ENCODE measurements at regions of chr13 and their contacts with region 1.

Region 1: DNA sequence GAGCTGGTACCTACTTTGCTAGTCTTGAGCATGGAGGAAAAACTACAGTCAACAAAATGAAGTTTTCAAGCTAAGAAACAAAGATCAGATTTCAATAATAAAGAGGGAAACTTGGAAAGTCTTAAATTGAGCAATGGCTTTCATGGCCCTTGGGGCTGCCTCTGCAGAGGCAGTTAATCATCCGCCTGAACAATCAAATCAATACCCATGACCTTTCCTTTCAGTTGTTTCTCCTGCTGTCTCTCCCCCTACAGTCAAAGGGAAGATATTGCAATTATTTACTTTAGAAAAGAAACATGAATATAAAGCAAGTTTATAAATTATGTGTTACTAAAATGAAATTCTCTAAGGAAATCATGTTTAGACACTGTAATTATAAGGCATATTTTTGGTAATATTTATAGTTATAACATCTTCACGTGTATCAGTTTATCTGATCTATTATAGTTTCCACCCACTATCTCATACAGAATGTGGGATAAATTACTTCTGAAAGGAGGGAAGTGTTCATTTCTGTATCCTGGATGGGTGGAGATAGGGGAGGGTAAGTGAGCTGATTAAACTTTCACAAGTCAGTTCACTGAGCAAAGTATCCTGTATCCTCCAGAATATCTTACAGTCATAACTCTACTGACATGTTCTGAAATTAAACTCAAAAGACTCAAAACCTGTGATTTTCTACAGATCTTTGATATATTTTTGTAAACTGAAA is 72.4 kb upstream of the TSC22D1 start:
- DNase-seq: peak; percentile 22
- H3K4me3 Mint-ChIP-seq: no peak overlapping the region
- H3K27ac Mint-ChIP-seq: no peak overlapping the region
- H3K4me1 Mint-ChIP-seq: peaks cover 16% of the 10 kb centered on the region
- H3K27me3 Mint-ChIP-seq: peaks cover 23% of the 10 kb centered on the region

Region 2: DNA sequence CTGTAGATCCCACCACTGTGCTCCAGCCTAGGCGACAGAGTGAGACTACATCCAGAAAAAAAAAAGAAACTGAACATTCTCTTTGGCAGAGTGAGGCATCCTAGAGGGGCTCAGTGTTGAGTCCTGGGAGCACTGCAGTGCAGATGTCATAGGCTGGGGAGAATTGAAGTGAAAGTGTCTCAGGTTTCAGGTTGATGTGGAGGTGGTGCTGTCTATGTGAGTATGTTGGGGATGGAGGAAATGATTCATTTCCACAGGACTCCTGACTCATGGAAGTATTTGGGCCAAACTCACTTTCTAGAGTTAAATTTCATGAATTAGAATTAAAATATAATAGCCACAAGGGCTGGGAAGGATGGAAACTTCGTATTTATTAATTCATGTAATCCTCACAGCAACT is 62.0 kb after region 1 on chr13:
- CTCF ChIA-PET with region 1: no interaction called
- POLR2A ChIA-PET with region 1: no interaction called
- intact Hi-C with region 1: loop called (anchors 2 kb)
- DNase-seq: peak; percentile 41
- H3K4me3 Mint-ChIP-seq: no peak overlapping the region
- H3K27ac Mint-ChIP-seq: no peak overlapping the region
- H3K4me1 Mint-ChIP-seq: peaks cover 6% of the 10 kb centered on the region
- H3K27me3 Mint-ChIP-seq: peaks cover 22% of the 10 kb centered on the region

Region 3: GRCh38 chr13:44758630-44759383 is 110.3 kb after region 1 on chr13:
- CTCF ChIA-PET with region 1: no interaction called
- POLR2A ChIA-PET with region 1: no interaction called
- intact Hi-C with region 1: loop called (anchors 2 kb)
- DNase-seq: peak; percentile 62
- H3K4me3 Mint-ChIP-seq: no peak overlapping the region
- H3K27ac Mint-ChIP-seq: peak overlapping the region; percentile 10
- H3K4me1 Mint-ChIP-seq: peaks cover 12% of the 10 kb centered on the region
- H3K27me3 Mint-ChIP-seq: peaks cover 2% of the 10 kb centered on the region

Region 4: GRCh38 chr13:44768239-44768638 is 119.7 kb after region 1 on chr13:
- CTCF ChIA-PET with region 1: no interaction called
- POLR2A ChIA-PET with region 1: no interaction called
- intact Hi-C with region 1: loop called (anchors 2 kb)
- DNase-seq: peak; percentile 65
- H3K4me3 Mint-ChIP-seq: no peak overlapping the region
- H3K27ac Mint-ChIP-seq: peak overlapping the region; percentile 51
- H3K4me1 Mint-ChIP-seq: peaks cover 27% of the 10 kb centered on the region
- H3K27me3 Mint-ChIP-seq: no peaks in the 10 kb centered on the region

Region 5: GRCh38 chr13:44801990-44802389 is 153.4 kb after region 1 on chr13:
- CTCF ChIA-PET with region 1: no interaction called
- POLR2A ChIA-PET with region 1: no interaction called
- intact Hi-C with region 1: no loop called
- DNase-seq: no peak
- H3K4me3 Mint-ChIP-seq: no peak overlapping the region
- H3K27ac Mint-ChIP-seq: no peak overlapping the region
- H3K4me1 Mint-ChIP-seq: no peaks in the 10 kb centered on the region
- H3K27me3 Mint-ChIP-seq: peaks cover 4% of the 10 kb centered on the region

Region 6: GRCh38 chr13:44815623-44816022 is 167.1 kb after region 1 on chr13:
- CTCF ChIA-PET with region 1: no interaction called
- POLR2A ChIA-PET with region 1: no interaction called
- intact Hi-C with region 1: loop called (anchors 2 kb)
- DNase-seq: peak; percentile 62
- H3K4me3 Mint-ChIP-seq: no peak overlapping the region
- H3K27ac Mint-ChIP-seq: no peak overlapping the region
- H3K4me1 Mint-ChIP-seq: peaks cover 22% of the 10 kb centered on the region
- H3K27me3 Mint-ChIP-seq: peaks cover 25% of the 10 kb centered on the region

Region 7: GRCh38 chr13:44868397-44868796 is 219.8 kb after region 1 on chr13:
- CTCF ChIA-PET with region 1: no interaction called
- POLR2A ChIA-PET with region 1: no interaction called
- intact Hi-C with region 1: loop called (anchors 1 kb)
- DNase-seq: no peak
- H3K4me3 Mint-ChIP-seq: no peak overlapping the region
- H3K27ac Mint-ChIP-seq: no peak overlapping the region
- H3K4me1 Mint-ChIP-seq: peaks cover 7% of the 10 kb centered on the region
- H3K27me3 Mint-ChIP-seq: peaks cover 3% of the 10 kb centered on the region